ENCODE measurements at regions of chr6 and their contacts with region 1.

Region 1: GRCh38 chr6:105402939-105403935 is at the start of gene PREP:
- DNase-seq: peak; percentile 86
- H3K4me3 ChIP-seq: peak within 1 kb of the TSS; percentile 76 to 97 (median 95)
- H3K27ac ChIP-seq: peak within 1 kb of the TSS; percentile 69
- H3K4me1 ChIP-seq: peaks cover 30% of the 10 kb centered on the region
- H3K27me3 ChIP-seq: no peaks in the 10 kb centered on the region
- CTCF ChIP-seq: peak; percentile 79 to 88
- total RNA-seq, gene PREP: 55.3 to 105 TPM

Region 2: GRCh38 chr6:105087571-105088211 is 315.5 kb before region 1 on chr6:
- CTCF ChIA-PET with region 1: interaction called, 8 read pairs
- dilution Hi-C with region 1: no loop called
- in situ Hi-C with region 1: loop called in 1 of 2 experiments (anchors 10 kb)
- intact Hi-C with region 1: loop called (anchors 1 kb)
- DNase-seq: peak; percentile 35
- H3K4me3 ChIP-seq: no peak overlapping the region
- H3K27ac ChIP-seq: no peak overlapping the region
- H3K4me1 ChIP-seq: no peaks in the 10 kb centered on the region
- H3K27me3 ChIP-seq: no peaks in the 10 kb centered on the region
- CTCF ChIP-seq: peak; percentile 76 to 81

Region 3: GRCh38 chr6:105112577-105112976 is 290.7 kb before region 1 on chr6:
- CTCF ChIA-PET with region 1: no interaction called
- dilution Hi-C with region 1: loop called (anchors 25 kb)
- in situ Hi-C with region 1: no loop called
- intact Hi-C with region 1: no loop called
- DNase-seq: no peak
- H3K4me3 ChIP-seq: no peak overlapping the region
- H3K27ac ChIP-seq: no peak overlapping the region
- H3K4me1 ChIP-seq: no peaks in the 10 kb centered on the region
- H3K27me3 ChIP-seq: no peaks in the 10 kb centered on the region
- CTCF ChIP-seq: peak in 1 of 2 donors; percentile 20

Region 4: DNA sequence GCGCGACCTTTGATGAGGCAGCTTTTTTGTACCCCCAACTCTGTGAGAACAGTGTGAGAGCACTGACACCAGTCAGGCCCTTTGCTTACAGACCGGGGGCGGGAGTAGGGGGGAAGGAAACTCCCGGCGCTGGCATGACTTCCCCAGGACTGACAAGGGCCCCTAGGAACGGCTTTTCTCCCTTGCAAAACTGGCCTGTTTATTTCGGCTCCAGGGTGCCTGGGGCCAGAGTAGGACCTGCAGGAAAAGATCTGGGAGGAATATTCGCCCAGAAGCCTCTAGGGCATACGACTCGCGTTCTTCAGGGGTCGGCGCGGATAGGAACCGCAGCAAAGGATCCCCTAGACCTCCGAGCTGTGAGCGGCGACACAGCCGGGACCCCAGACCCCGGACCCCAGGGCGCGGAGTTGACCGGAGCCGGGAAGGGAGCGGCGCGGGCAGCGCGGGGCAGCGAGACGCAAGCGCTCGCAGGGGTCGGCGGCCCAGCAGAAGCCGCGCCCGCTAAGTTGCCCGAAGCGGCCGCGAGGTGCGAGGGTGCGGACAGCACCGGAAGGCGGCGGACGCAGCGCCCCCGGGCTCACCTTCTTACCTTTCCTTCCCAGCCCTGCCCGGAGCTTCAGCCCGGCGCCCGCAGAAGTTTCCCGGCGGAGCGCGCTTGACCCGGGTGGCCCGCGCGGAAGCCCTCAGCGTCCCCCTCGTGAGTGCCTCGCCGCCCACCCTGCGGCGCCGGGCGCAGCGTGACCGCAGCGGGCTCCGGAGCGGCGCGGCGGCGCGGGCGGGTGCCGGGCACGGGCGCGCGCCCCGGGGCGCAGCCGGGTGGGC is 223.8 kb before region 1 on chr6 and contains the start of gene POPDC3:
- CTCF ChIA-PET with region 1: no interaction called
- dilution Hi-C with region 1: no loop called
- in situ Hi-C with region 1: no loop called
- intact Hi-C with region 1: loop called (anchors 5 kb)
- DNase-seq: peak; percentile 57
- H3K4me3 ChIP-seq: peak within 1 kb of the TSS; percentile 57 to 76 (median 68)
- H3K27ac ChIP-seq: peak within 1 kb of the TSS; percentile 87
- H3K4me1 ChIP-seq: peaks cover 10% of the 10 kb centered on the region
- H3K27me3 ChIP-seq: no peaks in the 10 kb centered on the region
- CTCF ChIP-seq: no peak
- total RNA-seq, gene POPDC3: 14.4 to 34.0 TPM

Region 5: DNA sequence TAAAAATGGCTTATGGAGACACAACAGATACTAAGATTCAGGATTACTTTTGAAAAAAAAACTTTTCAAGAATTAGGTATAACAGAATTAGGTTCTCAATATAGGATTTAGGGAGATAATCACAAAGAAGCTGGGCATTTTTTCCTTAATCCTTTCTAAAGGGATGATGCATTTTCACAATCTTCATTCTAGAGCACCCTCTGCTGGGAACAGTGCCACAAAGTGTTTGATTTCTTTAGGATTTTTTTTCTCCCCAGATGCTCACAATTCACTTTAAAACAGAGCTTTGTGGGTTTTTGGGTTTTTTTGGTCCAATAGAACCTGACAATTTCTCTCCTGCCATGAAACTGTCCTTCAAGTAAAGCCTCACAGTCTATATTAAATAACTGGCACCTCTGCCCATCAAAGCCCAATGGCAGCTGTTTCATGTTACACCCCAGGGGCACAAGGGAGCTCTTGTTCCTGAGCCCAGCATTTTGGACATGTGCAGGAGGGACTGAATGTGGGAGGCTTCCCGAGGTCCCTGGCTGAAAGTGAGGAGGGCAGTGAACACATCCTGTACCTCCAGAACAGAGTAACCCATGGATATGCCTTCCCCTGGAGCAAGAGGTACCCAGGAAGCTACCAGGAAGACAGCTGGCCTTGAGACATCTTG is 40.0 kb before region 1 on chr6:
- CTCF ChIA-PET with region 1: interaction called, 12 read pairs
- dilution Hi-C with region 1: no loop called
- in situ Hi-C with region 1: no loop called
- intact Hi-C with region 1: loop called (anchors 1 kb)
- DNase-seq: peak; percentile 33
- H3K4me3 ChIP-seq: no peak overlapping the region
- H3K27ac ChIP-seq: peak overlapping the region; percentile 94
- H3K4me1 ChIP-seq: peaks cover 58% of the 10 kb centered on the region
- H3K27me3 ChIP-seq: no peaks in the 10 kb centered on the region
- CTCF ChIP-seq: peak; percentile 32 to 49

Region 6: GRCh38 chr6:105424175-105424783 is 21.0 kb after region 1 on chr6:
- CTCF ChIA-PET with region 1: no interaction called
- dilution Hi-C with region 1: no loop called
- in situ Hi-C with region 1: no loop called
- intact Hi-C with region 1: loop called (anchors 1 kb)
- DNase-seq: peak; percentile 31
- H3K4me3 ChIP-seq: no peak overlapping the region
- H3K27ac ChIP-seq: no peak overlapping the region
- H3K4me1 ChIP-seq: peaks cover 16% of the 10 kb centered on the region
- H3K27me3 ChIP-seq: no peaks in the 10 kb centered on the region
- CTCF ChIP-seq: peak; percentile 52 to 75

Measured in mammary epithelial cell (primary cell).